HepG2 (cell line): ENCODE measurements at regions of chr3 and their contacts with region 1.

Region 1: GRCh38 chr3:192917404-192918274 is at the start of gene MB21D2:
- DNase-seq: peak; percentile 47
- ATAC-seq: peak; percentile 80
- H3K4me3 ChIP-seq: peak within 1 kb of the TSS; percentile 82 to 94 (median 89)
- H3K27ac ChIP-seq: no peak within 1 kb of the TSS
- H3K4me1 ChIP-seq: peaks cover 16% of the 10 kb centered on the region
- H3K27me3 ChIP-seq: peaks cover 0 to 28% of the 10 kb centered on the region in 2 experiments; a peak in 2 of 5 replicates
- CTCF ChIP-seq: no peak
- EP300 ChIP-seq: no peak
- POLR2A ChIP-seq: peak; percentile 19 to 35; a peak in 1 of 4 replicates
- RAD21 ChIP-seq: no peak
- total RNA-seq, gene MB21D2: 1.6 and 2.8 TPM in 2 replicates

Region 2: GRCh38 chr3:192597533-192598302 is 319.9 kb before region 1 on chr3:
- CTCF ChIA-PET with region 1: no interaction called
- POLR2A ChIA-PET with region 1: no interaction called
- in situ Hi-C with region 1: no loop called
- intact Hi-C with region 1: no loop called
- DNase-seq: no peak
- ATAC-seq: no peak
- H3K4me3 ChIP-seq: no peak overlapping the region
- H3K27ac ChIP-seq: no peak overlapping the region
- H3K4me1 ChIP-seq: no peaks in the 10 kb centered on the region
- H3K27me3 ChIP-seq: no peaks in the 10 kb centered on the region; a peak in 1 of 5 replicates
- CTCF ChIP-seq: no peak
- EP300 ChIP-seq: no peak
- POLR2A ChIP-seq: no peak
- RAD21 ChIP-seq: no peak

Region 3: DNA sequence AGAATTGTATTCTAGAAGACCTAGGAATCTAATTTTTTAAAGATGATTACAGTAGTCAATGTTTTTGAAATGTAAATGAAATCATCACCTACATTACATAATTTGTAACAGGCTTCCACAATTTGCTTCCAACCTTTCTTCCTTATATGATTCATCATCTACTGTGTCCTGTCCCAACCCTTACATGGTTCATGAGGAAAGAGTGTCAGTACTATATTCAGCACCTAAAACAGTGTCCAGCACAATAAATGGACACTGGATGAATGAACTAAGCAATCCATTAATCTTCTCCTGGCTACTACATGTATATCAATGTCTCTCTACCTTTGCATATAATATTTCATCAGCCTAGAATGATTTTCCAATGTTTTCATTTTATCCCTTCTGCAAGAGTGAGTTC is 202.5 kb before region 1 on chr3:
- CTCF ChIA-PET with region 1: no interaction called
- POLR2A ChIA-PET with region 1: no interaction called
- in situ Hi-C with region 1: no loop called
- intact Hi-C with region 1: no loop called
- DNase-seq: no peak
- ATAC-seq: no peak
- H3K4me3 ChIP-seq: no peak overlapping the region
- H3K27ac ChIP-seq: no peak overlapping the region
- H3K4me1 ChIP-seq: no peaks in the 10 kb centered on the region
- H3K27me3 ChIP-seq: no peaks in the 10 kb centered on the region
- CTCF ChIP-seq: no peak
- EP300 ChIP-seq: no peak
- POLR2A ChIP-seq: no peak
- RAD21 ChIP-seq: no peak

Region 4: DNA sequence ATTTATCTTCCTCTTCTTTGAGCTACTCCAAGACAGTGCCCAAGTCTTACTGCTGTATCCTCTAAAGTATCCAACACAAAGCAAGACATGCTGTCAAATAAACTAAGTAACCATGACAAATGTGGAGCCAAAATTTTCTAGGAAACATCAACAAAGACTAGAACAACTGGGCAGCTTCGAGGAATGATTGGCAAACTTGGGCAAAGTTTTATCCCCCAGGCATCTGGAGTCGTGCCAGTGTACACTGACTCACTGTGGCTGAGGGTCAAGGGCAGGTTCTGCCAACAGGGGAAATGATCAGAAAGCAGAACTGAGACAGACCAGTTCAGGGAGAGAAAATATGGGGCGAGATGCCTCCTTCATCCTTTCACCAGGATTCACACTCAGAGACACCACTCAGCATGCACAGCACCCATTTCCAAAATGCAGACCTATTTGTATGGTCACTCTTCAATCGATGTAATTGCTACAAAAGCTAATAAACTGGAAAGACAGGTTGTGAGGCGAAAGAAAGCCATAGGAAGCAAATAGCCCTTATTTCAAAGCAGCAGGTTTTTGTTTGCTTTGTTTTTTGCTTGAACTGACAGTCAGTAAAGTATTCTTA is 65.7 kb before region 1 on chr3:
- CTCF ChIA-PET with region 1: no interaction called
- POLR2A ChIA-PET with region 1: no interaction called
- in situ Hi-C with region 1: no loop called
- intact Hi-C with region 1: loop called (anchors 10 kb)
- DNase-seq: peak; percentile 86
- ATAC-seq: peak; percentile 77
- H3K4me3 ChIP-seq: no peak overlapping the region; a peak in 1 of 6 replicates
- H3K27ac ChIP-seq: no peak overlapping the region
- H3K4me1 ChIP-seq: peaks cover 28% of the 10 kb centered on the region
- H3K27me3 ChIP-seq: no peaks in the 10 kb centered on the region
- CTCF ChIP-seq: no peak
- EP300 ChIP-seq: peak; percentile 47 to 81; a peak in 3 of 4 replicates
- POLR2A ChIP-seq: no peak
- RAD21 ChIP-seq: no peak

Region 5: GRCh38 chr3:192887047-192887446 is 30.6 kb before region 1 on chr3:
- CTCF ChIA-PET with region 1: no interaction called
- POLR2A ChIA-PET with region 1: interaction called, 17 read pairs
- in situ Hi-C with region 1: no loop called
- intact Hi-C with region 1: no loop called
- DNase-seq: peak; percentile 38
- ATAC-seq: no peak
- H3K4me3 ChIP-seq: no peak overlapping the region
- H3K27ac ChIP-seq: no peak overlapping the region
- H3K4me1 ChIP-seq: peaks cover 63% of the 10 kb centered on the region
- H3K27me3 ChIP-seq: no peaks in the 10 kb centered on the region
- CTCF ChIP-seq: no peak
- EP300 ChIP-seq: no peak
- POLR2A ChIP-seq: no peak
- RAD21 ChIP-seq: no peak

Region 6: GRCh38 chr3:193040836-193041672 is 123.4 kb after region 1 on chr3:
- CTCF ChIA-PET with region 1: no interaction called
- POLR2A ChIA-PET with region 1: no interaction called
- in situ Hi-C with region 1: no loop called
- intact Hi-C with region 1: loop called (anchors 2 kb)
- DNase-seq: peak; percentile 24
- ATAC-seq: peak; percentile 60; the same call in 2 of the 3 replicates
- H3K4me3 ChIP-seq: no peak overlapping the region
- H3K27ac ChIP-seq: no peak overlapping the region
- H3K4me1 ChIP-seq: no peaks in the 10 kb centered on the region
- H3K27me3 ChIP-seq: no peaks in the 10 kb centered on the region
- CTCF ChIP-seq: peak; percentile 58
- EP300 ChIP-seq: no peak
- POLR2A ChIP-seq: no peak
- RAD21 ChIP-seq: no peak